Activated B cell treated with CpG ODN at 0.5 μM for 24 hours (primary cell): ENCODE measurements at regions of chr14 and their contacts with region 1.

Region 1: GRCh38 chr14:95697764-95698163 is 11.5 kb downstream of the TCL1B start:
- DNase-seq: no peak
- ATAC-seq: peak; percentile 64
- H3K4me3 Mint-ChIP-seq: peak overlapping the region; percentile 74
- H3K27ac Mint-ChIP-seq: peak overlapping the region; percentile 94
- H3K4me1 Mint-ChIP-seq: peaks cover 96% of the 10 kb centered on the region
- H3K27me3 Mint-ChIP-seq: peaks cover 6% of the 10 kb centered on the region
- CTCF ChIP-seq: no peak

Region 2: GRCh38 chr14:95134304-95134933 is 563.3 kb before region 1 on chr14:
- CTCF ChIA-PET with region 1: no interaction called
- POLR2A ChIA-PET with region 1: no interaction called
- intact Hi-C with region 1: no loop called
- DNase-seq: no peak
- ATAC-seq: no peak
- H3K4me3 Mint-ChIP-seq: no peak overlapping the region
- H3K27ac Mint-ChIP-seq: peak overlapping the region; percentile 14
- H3K4me1 Mint-ChIP-seq: peaks cover 38% of the 10 kb centered on the region
- H3K27me3 Mint-ChIP-seq: no peaks in the 10 kb centered on the region
- CTCF ChIP-seq: no peak

Region 3: GRCh38 chr14:95725685-95726336 is 28.0 kb after region 1 on chr14:
- CTCF ChIA-PET with region 1: interaction called, 5 read pairs
- POLR2A ChIA-PET with region 1: interaction called, 28 read pairs
- intact Hi-C with region 1: loop called (anchors 2 kb)
- DNase-seq: no peak
- ATAC-seq: peak; percentile 81
- H3K4me3 Mint-ChIP-seq: peak overlapping the region; percentile 68
- H3K27ac Mint-ChIP-seq: peak overlapping the region; percentile 83
- H3K4me1 Mint-ChIP-seq: peaks cover 80% of the 10 kb centered on the region
- H3K27me3 Mint-ChIP-seq: peaks cover 24% of the 10 kb centered on the region
- CTCF ChIP-seq: no peak